ENCODE measurements at regions of chr2 and their contacts with region 1.

Region 1: DNA sequence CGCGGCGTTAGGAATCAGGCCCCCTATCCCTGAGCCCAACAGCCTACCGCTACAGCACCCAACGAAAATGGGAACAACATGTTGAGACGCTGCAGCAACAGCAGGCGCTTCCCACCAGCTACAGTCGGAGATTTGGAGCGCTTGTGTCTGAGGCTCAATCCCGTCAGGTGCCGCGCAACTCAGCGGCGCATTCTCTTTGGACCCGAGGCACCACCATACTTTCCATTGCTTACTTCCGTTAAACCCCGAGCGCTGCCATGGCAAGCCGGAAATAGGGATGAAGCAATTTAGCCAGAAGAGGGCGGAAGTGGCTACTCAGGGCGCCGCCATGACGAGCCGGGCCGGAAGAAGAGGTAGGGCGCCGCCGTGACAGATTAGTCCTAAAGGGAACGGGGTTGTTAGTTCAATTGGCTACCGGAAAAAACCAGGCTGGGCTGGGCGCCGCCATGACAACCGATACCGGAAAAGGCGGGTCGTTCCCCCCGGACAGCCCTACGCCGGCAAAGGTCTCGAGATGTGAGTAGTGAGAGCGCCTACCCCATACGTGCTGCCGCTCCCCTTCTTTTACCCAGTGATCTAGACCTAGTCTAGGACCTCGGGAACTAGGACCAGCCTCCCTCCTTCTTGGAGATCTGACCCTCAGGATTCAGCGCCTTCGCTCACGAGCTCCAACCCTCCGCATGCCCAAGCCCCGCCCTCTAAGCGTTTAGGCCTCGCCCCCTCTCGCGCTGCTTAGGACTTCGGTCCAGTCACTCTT is at the start of gene CHCHD5:
- DNase-seq: peak; percentile 98
- H3K4me3 Mint-ChIP-seq: peak within 1 kb of the TSS; percentile 92
- H3K27ac Mint-ChIP-seq: peak within 1 kb of the TSS; percentile 100
- H3K4me1 Mint-ChIP-seq: peaks cover 24% of the 10 kb centered on the region
- H3K27me3 Mint-ChIP-seq: no peaks in the 10 kb centered on the region
- CTCF ChIP-seq: no peak
- total RNA-seq, gene CHCHD5: 54.5 and 56.1 TPM in 2 replicates

Region 2: DNA sequence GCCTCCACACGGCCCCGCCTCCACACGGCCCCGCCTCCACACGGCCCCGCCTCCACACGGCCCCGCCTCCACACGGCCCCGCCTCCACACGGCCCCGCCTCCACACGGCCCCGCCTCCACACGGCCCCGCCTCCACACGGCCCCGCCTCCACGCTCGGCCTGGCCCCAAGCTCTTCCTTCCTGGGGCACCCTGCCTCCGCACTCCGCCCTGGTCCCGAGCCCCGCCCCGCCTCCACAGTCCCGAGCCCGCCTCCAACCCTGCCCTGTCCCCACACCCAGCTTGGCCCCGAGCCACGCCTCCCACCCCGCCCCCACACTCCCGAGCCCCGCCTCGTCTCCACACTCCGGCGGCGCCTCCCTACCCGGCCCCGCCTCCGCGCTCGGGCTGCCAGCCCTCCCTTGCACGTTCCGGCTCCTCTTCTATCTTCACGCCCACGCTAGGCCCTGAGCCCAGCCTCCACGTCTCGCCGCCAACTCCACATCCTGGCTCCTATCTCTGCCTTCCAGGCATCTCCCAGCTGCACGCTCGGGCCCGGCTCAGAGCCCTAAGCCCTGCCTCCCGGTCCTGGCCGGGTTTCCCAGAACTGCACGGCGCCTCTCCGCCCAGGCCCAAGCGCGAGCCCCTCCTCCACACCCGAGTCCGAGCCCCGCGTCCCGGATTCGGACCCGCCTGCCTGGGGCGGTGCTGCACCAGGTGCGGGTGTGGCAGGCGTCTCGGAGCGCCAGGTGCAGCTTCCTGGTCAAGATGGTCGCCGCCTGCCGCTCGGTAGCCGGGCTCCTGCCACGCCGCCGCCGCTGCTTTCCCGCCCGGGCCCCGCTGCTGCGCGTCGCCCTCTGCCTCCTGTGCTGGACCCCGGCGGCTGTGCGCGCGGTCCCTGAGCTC is 529.2 kb before region 1 on chr2 and contains the start of gene TMEM87B:
- CTCF ChIA-PET with region 1: no interaction called
- POLR2A ChIA-PET with region 1: no interaction called
- intact Hi-C with region 1: loop called (anchors 5 kb)
- DNase-seq: peak; percentile 98
- H3K4me3 Mint-ChIP-seq: peak within 1 kb of the TSS; percentile 96
- H3K27ac Mint-ChIP-seq: peak within 1 kb of the TSS; percentile 76
- H3K4me1 Mint-ChIP-seq: peaks cover 34% of the 10 kb centered on the region
- H3K27me3 Mint-ChIP-seq: no peaks in the 10 kb centered on the region
- CTCF ChIP-seq: no peak
- total RNA-seq, gene TMEM87B: 29.1 and 39.2 TPM in 2 replicates

Region 3: DNA sequence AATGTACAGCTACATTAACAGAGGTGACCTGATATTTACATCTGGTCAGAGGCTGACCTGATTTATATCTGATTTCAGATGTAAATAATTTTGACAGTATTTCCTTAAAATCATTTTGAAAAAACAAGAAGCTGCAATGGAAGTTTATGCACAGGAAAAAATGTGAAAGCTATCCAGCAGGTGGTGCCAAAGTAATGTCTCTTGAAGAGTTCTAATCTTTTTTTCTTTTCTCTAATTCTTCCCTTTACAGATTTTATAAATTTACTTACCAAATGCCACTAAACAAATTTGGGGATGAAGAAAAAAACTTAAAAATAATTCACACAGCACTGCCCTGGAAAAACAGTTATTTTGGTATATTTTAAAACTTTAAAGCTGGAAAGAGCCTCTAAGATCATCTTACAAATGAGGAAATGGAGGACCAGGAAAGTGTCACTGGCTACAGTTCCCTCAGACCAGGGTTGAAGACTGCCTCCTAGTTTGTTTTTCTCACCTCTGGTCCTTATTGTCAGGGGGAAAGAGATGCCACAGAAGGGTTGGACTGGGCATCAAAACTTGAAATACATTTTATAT is 462.5 kb before region 1 on chr2:
- CTCF ChIA-PET with region 1: interaction called, 4 read pairs
- POLR2A ChIA-PET with region 1: no interaction called
- intact Hi-C with region 1: loop called (anchors 1 kb)
- DNase-seq: peak; percentile 47
- H3K4me3 Mint-ChIP-seq: no peak overlapping the region
- H3K27ac Mint-ChIP-seq: no peak overlapping the region
- H3K4me1 Mint-ChIP-seq: no peaks in the 10 kb centered on the region
- H3K27me3 Mint-ChIP-seq: no peaks in the 10 kb centered on the region
- CTCF ChIP-seq: peak; percentile 52

Region 4: GRCh38 chr2:112254466-112255239 is 329.7 kb before region 1 on chr2 and contains the start of gene ZC3H8:
- CTCF ChIA-PET with region 1: no interaction called
- POLR2A ChIA-PET with region 1: interaction called, 3 read pairs
- intact Hi-C with region 1: loop called (anchors 5 kb)
- DNase-seq: peak; percentile 90
- H3K4me3 Mint-ChIP-seq: peak within 1 kb of the TSS; percentile 77
- H3K27ac Mint-ChIP-seq: peak within 1 kb of the TSS; percentile 76
- H3K4me1 Mint-ChIP-seq: peaks cover 8% of the 10 kb centered on the region
- H3K27me3 Mint-ChIP-seq: no peaks in the 10 kb centered on the region
- CTCF ChIP-seq: no peak
- total RNA-seq, gene ZC3H8: 20.6 and 30.5 TPM in 2 replicates

Region 5: GRCh38 chr2:112481050-112481527 is 103.2 kb before region 1 on chr2:
- CTCF ChIA-PET with region 1: interaction called, 7 read pairs
- POLR2A ChIA-PET with region 1: interaction called, 18 read pairs
- intact Hi-C with region 1: loop called (anchors 1 kb)
- DNase-seq: peak; percentile 87
- H3K4me3 Mint-ChIP-seq: peak overlapping the region; percentile 88
- H3K27ac Mint-ChIP-seq: peak overlapping the region; percentile 86
- H3K4me1 Mint-ChIP-seq: peaks cover 15% of the 10 kb centered on the region
- H3K27me3 Mint-ChIP-seq: no peaks in the 10 kb centered on the region
- CTCF ChIP-seq: peak; percentile 86

Region 6: GRCh38 chr2:112542123-112542983 is 42.0 kb before region 1 on chr2 and contains the start of gene POLR1B:
- CTCF ChIA-PET with region 1: interaction called, 8 read pairs
- POLR2A ChIA-PET with region 1: interaction called, 20 read pairs
- intact Hi-C with region 1: loop called (anchors 2 kb)
- DNase-seq: peak; percentile 90
- H3K4me3 Mint-ChIP-seq: no peak within 1 kb of the TSS
- H3K27ac Mint-ChIP-seq: no peak within 1 kb of the TSS
- H3K4me1 Mint-ChIP-seq: peaks cover 11% of the 10 kb centered on the region
- H3K27me3 Mint-ChIP-seq: no peaks in the 10 kb centered on the region
- CTCF ChIP-seq: no peak
- total RNA-seq, gene POLR1B: 51.6 and 74.0 TPM in 2 replicates

Measured in MCF 10A (cell line).